Activated naive CD8-positive, alpha-beta T cell treated with anti-CD3 and anti-CD28 coated beads, Interleukin-2, amount 10 ng/mL, durations not matched to agents 7 days and 5 days (primary cell): ENCODE measurements at regions of chr20 and their contacts with region 1.

Region 1: DNA sequence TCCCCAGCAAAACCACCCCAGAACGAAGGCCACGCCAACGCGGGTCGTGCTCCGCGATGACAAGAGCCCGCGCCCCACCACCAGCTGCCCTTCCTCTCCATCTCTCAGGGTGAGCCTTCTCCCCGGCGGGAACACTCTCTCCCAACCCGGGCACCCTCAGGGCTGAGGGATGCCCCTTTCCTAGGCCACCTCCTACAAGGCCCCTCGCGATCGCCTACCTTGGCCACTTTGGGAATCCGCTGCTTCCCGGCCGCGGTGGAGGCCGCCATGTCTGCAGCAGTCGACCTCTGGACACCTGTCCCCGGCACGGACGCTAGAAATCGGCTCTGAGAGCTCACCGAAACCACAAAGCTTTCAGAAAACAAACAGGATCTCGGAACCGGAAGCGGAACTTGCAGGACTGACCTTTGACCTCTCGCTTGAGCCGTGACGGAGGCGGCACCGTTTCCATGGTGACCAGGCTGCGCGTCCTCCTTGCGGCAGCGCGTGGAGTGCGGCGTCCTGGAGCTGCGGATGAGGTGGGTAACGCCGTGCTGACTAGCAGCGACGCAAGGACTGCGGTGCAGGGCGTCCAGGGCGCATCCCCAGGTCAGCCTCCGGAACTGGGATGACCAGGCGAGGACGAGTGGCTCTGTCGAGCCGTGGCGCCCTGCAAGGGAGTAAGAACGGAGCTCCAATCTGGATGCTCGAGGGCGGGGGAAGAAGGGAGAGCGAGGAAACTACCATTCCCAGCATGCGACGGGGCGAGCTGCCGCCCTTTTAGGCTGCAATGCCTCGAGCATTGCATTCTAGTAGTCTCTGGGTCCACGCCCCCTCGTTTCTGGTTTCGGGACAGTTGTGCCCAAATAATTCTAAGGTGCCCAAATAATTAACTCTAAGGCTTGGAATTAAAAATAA is at the starts of genes CFAP61 and CRNKL1:
- DNase-seq: peak; percentile 94
- ATAC-seq: peak; percentile 94
- H3K4me3 Mint-ChIP-seq: peak within 1 kb of the TSS; percentile 97
- H3K27ac Mint-ChIP-seq: peak within 1 kb of the TSS; percentile 96
- H3K4me1 Mint-ChIP-seq: peaks cover 11% of the 10 kb centered on the region
- H3K27me3 Mint-ChIP-seq: no peaks in the 10 kb centered on the region
- total RNA-seq, gene CFAP61: not detected
- total RNA-seq, gene CRNKL1: 23.2 to 25.1 TPM

Region 2: GRCh38 chr20:19889011-19889953 is 163.0 kb before region 1 on chr20:
- POLR2A ChIA-PET with region 1: no interaction called
- DNase-seq: no peak
- ATAC-seq: no peak
- H3K4me3 Mint-ChIP-seq: no peak overlapping the region
- H3K27ac Mint-ChIP-seq: no peak overlapping the region
- H3K4me1 Mint-ChIP-seq: no peaks in the 10 kb centered on the region
- H3K27me3 Mint-ChIP-seq: peaks cover 10% of the 10 kb centered on the region

Region 3: DNA sequence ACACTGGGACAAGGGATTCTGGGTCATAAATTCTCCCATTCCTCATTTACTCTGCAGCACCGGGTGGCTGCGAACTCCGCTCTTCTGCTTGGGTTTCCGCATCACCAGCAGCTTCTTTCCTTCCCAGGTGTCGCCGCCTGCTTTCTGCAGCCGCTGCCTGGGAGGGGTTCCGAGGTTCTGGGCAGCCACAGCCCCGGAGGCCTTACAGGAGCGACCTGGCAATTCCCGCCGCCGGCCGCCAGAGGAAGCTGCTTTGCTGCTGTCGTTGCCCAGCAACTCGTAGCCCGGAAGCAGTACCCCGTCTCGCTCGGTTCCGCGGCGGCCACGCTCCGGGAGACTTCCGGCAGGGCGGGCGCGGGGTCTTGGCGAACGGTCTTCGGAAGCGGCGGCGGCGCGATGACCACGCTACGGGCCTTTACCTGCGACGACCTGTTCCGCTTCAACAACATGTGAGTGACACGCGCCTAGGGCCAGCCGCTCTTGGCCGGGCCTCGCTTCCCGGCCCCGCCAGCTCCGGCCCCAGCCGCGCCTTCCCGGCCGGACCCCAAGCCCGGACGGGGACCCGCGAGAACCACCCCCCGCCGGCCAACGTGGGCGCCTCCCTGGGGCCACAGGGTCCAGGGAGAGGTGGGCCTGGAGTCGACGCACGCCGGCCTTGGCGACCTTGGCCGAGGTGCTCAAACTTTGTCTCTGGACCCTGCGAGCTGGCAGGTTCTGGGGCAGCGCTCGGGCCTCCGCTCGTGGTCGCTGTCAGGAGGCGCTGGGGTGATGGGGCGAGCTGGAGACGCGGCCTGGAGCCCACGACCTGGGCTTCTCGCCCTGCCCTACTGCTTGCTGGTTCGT is 35.1 kb before region 1 on chr20 and contains the start of gene NAA20:
- POLR2A ChIA-PET with region 1: interaction called, 37 read pairs
- DNase-seq: peak; percentile 91
- ATAC-seq: peak; percentile 94
- H3K4me3 Mint-ChIP-seq: peak within 1 kb of the TSS; percentile 90
- H3K27ac Mint-ChIP-seq: peak within 1 kb of the TSS; percentile 86
- H3K4me1 Mint-ChIP-seq: peaks cover 45% of the 10 kb centered on the region
- H3K27me3 Mint-ChIP-seq: no peaks in the 10 kb centered on the region
- total RNA-seq, gene NAA20: 40.1 to 42.7 TPM

Region 4: DNA sequence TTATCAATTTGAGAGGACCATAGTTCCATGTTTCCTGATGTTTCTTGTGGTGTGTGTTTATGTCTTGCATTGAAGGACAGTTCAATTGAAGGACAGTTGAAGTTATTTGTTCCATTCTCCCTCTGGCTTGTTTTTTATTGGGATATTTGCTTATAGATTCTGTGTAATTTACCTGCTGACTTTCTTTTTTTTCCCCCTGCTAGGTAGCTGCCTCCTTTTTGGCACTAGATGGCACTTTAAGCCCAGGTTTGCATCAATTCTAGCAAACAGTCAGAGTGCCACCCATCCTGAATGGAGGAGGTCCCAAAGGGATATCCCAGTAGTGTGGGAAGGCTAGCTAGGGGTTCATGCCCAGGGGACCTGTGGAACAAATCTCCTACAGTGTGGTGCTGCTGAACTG is 78.1 kb after region 1 on chr20:
- POLR2A ChIA-PET with region 1: no interaction called
- DNase-seq: no peak
- ATAC-seq: no peak
- H3K4me3 Mint-ChIP-seq: no peak overlapping the region
- H3K27ac Mint-ChIP-seq: no peak overlapping the region
- H3K4me1 Mint-ChIP-seq: no peaks in the 10 kb centered on the region
- H3K27me3 Mint-ChIP-seq: peaks cover 4% of the 10 kb centered on the region